ENCODE measurements at regions of chr2 and their contacts with region 1.

Region 1: DNA sequence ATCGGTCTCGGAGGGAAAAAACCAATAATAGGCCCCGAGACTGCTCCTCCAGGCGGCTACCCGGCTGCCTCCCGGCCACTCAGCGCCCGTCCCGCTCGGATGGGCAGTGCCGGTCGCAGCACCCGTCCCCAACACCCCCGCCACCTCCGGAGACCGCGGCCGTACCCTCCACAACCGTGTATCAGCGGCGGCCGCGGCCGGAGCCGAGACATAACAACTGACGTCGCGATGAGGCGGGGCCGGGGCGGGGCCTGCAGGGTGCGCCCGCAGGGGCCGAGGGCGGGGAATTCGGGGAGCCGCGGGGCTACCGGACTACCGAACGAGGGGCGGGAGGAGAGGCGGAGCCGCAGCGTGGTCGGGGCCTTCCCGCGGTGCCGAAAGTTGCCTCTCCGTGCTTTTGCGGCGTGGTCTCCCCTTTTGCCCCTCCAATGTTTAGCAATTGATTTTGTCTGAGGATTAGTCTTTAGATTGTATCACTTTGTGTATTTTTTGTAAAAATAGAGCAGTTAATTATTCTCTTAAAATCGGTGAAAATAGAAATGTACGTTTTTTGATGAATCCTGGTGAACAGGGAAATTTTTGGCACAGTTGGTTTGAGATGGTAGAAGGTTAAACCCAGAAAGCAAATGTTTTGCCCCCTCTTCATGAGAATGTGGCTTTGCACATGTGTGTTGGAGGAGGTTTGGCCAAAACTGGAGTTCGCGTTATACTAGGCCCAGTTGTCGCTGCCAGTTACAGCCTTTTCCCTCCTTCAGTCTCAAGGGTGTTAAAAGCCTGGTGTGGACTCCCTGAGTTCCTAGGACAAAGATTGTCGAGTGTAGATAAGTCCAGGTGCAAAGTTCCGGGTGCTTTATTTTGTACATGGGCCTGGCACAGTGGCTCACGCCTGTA is at the start of gene RNF103:
- DNase-seq: peak; percentile 98 to 100
- ATAC-seq: peak; percentile 98
- H3K4me3 ChIP-seq: peak within 1 kb of the TSS; percentile 79 to 84
- H3K27ac ChIP-seq: peak within 1 kb of the TSS; percentile 88 to 94
- H3K4me1 ChIP-seq: peaks cover 0 to 2% of the 10 kb centered on the region in 2 donors
- H3K27me3 ChIP-seq: no peaks in the 10 kb centered on the region
- total RNA-seq, gene RNF103: 30.5 to 31.0 TPM

Region 2: DNA sequence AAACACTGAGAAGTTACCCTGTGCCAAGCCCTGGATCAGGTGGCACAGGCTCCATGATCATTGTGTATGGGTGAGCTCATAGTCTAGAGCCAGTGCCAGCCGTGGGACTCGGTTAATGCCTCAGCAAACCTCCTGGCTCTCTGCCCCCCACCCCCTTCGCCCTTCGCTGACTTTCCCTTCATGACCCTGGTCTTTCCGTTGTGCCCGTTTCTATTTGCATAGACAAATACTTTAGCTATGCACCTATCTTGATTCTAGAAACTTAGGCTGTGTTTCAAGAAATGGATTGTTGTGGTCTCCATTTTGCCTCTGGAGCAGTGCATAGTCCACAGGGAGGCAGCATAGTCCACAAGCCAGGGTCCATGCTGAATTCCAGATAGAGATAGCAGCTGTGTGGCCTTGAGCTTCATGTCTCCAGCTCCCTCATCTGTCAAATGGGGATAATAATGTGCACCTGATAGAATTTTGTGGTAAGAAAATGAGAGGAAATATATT is 227.6 kb before region 1 on chr2:
- intact Hi-C with region 1: loop called in 1 of 2 experiments (anchors 5 kb)
- DNase-seq: peak in 1 of 2 donors; percentile 56
- ATAC-seq: peak; percentile 64
- H3K4me3 ChIP-seq: no peak overlapping the region
- H3K27ac ChIP-seq: no peak overlapping the region
- H3K4me1 ChIP-seq: peaks cover 0 to 5% of the 10 kb centered on the region in 2 donors
- H3K27me3 ChIP-seq: peaks cover 0 to 1% of the 10 kb centered on the region in 2 donors

Region 3: GRCh38 chr2:86562922-86563649 is 60.8 kb before region 1 on chr2 and contains the start of gene CHMP3:
- intact Hi-C with region 1: loop called in 1 of 2 experiments (anchors 1 kb)
- DNase-seq: peak; percentile 98 to 99
- ATAC-seq: peak; percentile 99
- H3K4me3 ChIP-seq: peak within 1 kb of the TSS; percentile 66 to 90
- H3K27ac ChIP-seq: peak within 1 kb of the TSS; percentile 83 to 97
- H3K4me1 ChIP-seq: peaks cover 0 to 6% of the 10 kb centered on the region in 2 donors
- H3K27me3 ChIP-seq: no peaks in the 10 kb centered on the region
- total RNA-seq, gene CHMP3: 137 to 154 TPM

Measured in aorta (tissue), 5 donors.